K562 (cell line): ENCODE measurements at regions of chr9 and their contacts with region 1.

Region 1: GRCh38 chr9:131304687-131305394 is 15.3 kb downstream of the PLPP7 start:
- DNase-seq: no peak
- ATAC-seq: peak; percentile 31
- H3K4me3 ChIP-seq: no peak overlapping the region
- H3K27ac ChIP-seq: no peak overlapping the region
- H3K4me1 ChIP-seq: peaks cover 8 to 51% of the 10 kb centered on the region in 2 experiments
- H3K27me3 ChIP-seq: no peaks in the 10 kb centered on the region
- CTCF ChIP-seq: no peak
- EP300 ChIP-seq: 0 out of 2 replicates have a peak, but pooled peaks have one; percentile 13
- POLR2A ChIP-seq: no peak
- RAD21 ChIP-seq: no peak

Region 2: GRCh38 chr9:131138676-131139075 is 166.2 kb before region 1 on chr9:
- CTCF ChIA-PET with region 1: no interaction called
- POLR2A ChIA-PET with region 1: no interaction called
- in situ Hi-C with region 1: no loop called
- intact Hi-C with region 1: no loop called
- DNase-seq: peak in 3 of 4 experiments; percentile 63 to 80 (median 78)
- ATAC-seq: peak; percentile 7
- H3K4me3 ChIP-seq: no peak overlapping the region
- H3K27ac ChIP-seq: no peak overlapping the region
- H3K4me1 ChIP-seq: peaks cover 0 to 6% of the 10 kb centered on the region in 2 experiments; a peak in 2 of 5 replicates
- H3K27me3 ChIP-seq: no peaks in the 10 kb centered on the region
- CTCF ChIP-seq: no peak
- EP300 ChIP-seq: no peak
- POLR2A ChIP-seq: no peak
- RAD21 ChIP-seq: no peak

Region 3: DNA sequence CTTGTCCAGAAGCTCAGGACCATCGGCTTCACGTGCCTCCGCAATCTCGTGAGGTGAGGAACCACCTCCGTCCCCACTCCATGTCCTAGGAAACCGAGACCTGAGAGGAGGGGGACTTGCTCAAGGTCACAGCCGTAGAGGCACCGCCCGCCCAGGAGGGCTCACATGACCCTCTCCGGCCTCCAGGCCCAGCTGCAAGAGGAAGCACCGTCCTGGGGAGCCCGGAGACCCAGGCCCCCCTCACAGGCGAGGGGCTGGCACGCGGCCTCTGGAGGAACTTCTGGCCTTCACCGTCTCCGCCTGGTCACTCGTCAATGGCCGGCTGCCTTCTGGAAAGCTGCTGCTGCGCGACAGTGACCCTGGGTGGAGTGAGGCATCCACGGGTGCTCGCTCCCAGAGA is 52.7 kb before region 1 on chr9:
- CTCF ChIA-PET with region 1: no interaction called
- POLR2A ChIA-PET with region 1: no interaction called
- in situ Hi-C with region 1: no loop called
- intact Hi-C with region 1: no loop called
- DNase-seq: no peak
- ATAC-seq: peak; percentile 0; the same call in 1 of the 3 replicates
- H3K4me3 ChIP-seq: no peak overlapping the region
- H3K27ac ChIP-seq: no peak overlapping the region
- H3K4me1 ChIP-seq: peaks cover 12 to 16% of the 10 kb centered on the region in 2 experiments
- H3K27me3 ChIP-seq: peaks cover 3 to 13% of the 10 kb centered on the region in 2 experiments; a peak in 4 of 5 replicates
- CTCF ChIP-seq: no peak
- EP300 ChIP-seq: no peak
- POLR2A ChIP-seq: no peak
- RAD21 ChIP-seq: no peak

Region 4: DNA sequence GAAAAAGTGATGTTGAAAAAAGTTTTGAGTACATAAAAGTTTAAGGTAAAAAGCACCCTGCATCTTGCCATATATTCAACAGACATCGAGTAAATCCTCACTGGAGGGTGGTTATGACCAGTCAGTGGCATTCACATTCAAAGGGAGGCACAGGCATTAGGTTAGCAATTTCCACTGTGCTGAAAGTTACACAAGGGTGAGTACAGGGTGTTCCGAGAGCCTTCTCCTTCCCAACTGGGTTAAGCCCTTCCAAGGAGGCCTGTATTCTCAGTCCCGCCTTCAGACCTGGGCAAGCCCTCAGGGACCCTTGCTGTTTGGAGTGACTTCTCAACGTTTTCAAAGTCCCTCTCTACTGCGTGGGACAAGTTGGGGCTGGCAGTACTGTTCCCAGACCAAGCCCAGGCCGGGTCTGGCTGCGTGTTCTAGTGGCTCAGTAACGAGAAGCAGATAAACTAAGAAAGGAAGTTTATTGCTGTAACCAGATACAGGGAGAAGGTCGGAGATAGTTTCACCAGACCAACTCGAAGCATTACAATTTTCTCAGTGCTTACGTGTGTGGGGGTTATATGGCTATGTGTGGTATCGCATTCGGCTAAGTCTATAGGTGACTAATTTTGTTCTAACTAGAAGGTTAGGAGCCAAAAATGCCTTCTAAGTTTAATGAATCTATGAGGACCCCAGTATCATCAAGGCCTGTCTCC is 1062.9 kb after region 1 on chr9:
- CTCF ChIA-PET with region 1: no interaction called
- POLR2A ChIA-PET with region 1: no interaction called
- in situ Hi-C with region 1: no loop called
- intact Hi-C with region 1: loop called (anchors 10 kb)
- DNase-seq: no peak
- ATAC-seq: peak; percentile 47
- H3K4me3 ChIP-seq: no peak overlapping the region
- H3K27ac ChIP-seq: no peak overlapping the region
- H3K4me1 ChIP-seq: no peaks in the 10 kb centered on the region; a peak in 2 of 5 replicates
- H3K27me3 ChIP-seq: no peaks in the 10 kb centered on the region
- CTCF ChIP-seq: no peak
- EP300 ChIP-seq: no peak
- POLR2A ChIP-seq: no peak
- RAD21 ChIP-seq: no peak